Activated T-helper 2 cell treated with anti-CD3 and anti-CD28 coated beads, Interferon-gamma antibody, Interleukin-2, Interleukin-4, amounts not matched to agents 10 μg/mL and 5 μg/mL and 100 μg/mL, durations not matched to agents 14 hours and 24 hours and 36 hours (primary cell): ENCODE measurements at regions of chr3 and their contacts with region 1.

Region 1: GRCh38 chr3:149702691-149703441 is 45.0 kb upstream of the WWTR1 start:
- DNase-seq: no peak
- H3K4me3 Mint-ChIP-seq: no peak overlapping the region
- H3K27ac Mint-ChIP-seq: peak overlapping the region; percentile 80
- H3K4me1 Mint-ChIP-seq: peaks cover 25% of the 10 kb centered on the region
- H3K27me3 Mint-ChIP-seq: no peaks in the 10 kb centered on the region

Region 2: GRCh38 chr3:149657926-149658733 is 44.7 kb before region 1 on chr3 and contains the start of gene WWTR1:
- intact Hi-C with region 1: loop called (anchors 2 kb)
- DNase-seq: peak; percentile 26
- H3K4me3 Mint-ChIP-seq: peak within 1 kb of the TSS; percentile 90
- H3K27ac Mint-ChIP-seq: peak within 1 kb of the TSS; percentile 73
- H3K4me1 Mint-ChIP-seq: peaks cover 22% of the 10 kb centered on the region
- H3K27me3 Mint-ChIP-seq: peaks cover 39% of the 10 kb centered on the region
- total RNA-seq, gene WWTR1: 2.6 TPM in 2 replicates

Region 3: GRCh38 chr3:149726716-149727407 is 24.0 kb after region 1 on chr3:
- intact Hi-C with region 1: loop called (anchors 1 kb)
- DNase-seq: no peak
- H3K4me3 Mint-ChIP-seq: no peak overlapping the region
- H3K27ac Mint-ChIP-seq: no peak overlapping the region
- H3K4me1 Mint-ChIP-seq: peaks cover 9% of the 10 kb centered on the region
- H3K27me3 Mint-ChIP-seq: no peaks in the 10 kb centered on the region